ENCODE measurements at regions of chr14 and their contacts with region 1.

Region 1: GRCh38 chr14:100900837-100901390 is 2.6 kb downstream of the RTL1 start:
- DNase-seq: peak; percentile 80

Region 2: GRCh38 chr14:100375963-100376735 is 524.8 kb before region 1 on chr14:
- in situ Hi-C with region 1: loop called (anchors 25 kb)
- DNase-seq: peak; percentile 97

Region 3: DNA sequence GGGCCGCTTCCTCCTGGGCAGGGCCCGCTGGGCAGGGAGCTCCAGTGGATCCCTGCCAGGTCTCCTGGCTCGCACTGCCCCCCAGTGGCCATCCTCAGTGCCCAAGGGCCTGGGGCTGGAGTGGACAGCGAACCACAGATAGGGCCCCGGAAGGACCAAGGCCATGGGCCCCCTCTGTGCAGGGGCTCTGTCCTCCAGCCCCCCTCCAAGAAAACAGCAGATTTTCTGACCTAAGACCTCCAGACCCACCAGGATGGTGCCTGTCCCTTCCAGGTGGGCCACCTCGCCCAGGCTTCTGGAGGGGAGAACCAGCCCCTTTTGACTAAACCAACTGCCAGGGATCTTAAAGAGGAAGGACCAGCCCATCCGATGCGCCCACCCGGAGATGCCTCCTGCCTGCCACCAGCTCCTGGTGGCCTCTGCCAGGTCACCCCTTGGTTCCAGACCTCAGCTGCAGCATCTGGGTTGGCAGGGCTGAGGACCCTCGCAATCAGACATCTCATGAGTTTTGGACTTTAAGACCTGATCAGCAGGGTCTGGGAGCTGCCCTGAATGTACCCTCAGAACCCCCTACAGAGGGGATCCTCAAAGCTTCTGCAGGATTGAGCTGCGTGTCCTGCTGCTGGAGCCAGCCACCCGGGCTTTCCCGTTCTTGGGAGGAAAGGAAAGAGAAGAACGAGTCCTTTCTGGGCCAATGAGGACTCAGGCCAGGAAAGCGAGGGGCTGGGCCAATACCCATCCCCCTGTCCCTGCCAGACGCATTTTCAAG is 334.6 kb after region 1 on chr14:
- in situ Hi-C with region 1: loop called (anchors 25 kb)
- DNase-seq: peak; percentile 58

Region 4: GRCh38 chr14:101628471-101628966 is 727.6 kb after region 1 on chr14:
- in situ Hi-C with region 1: loop called (anchors 25 kb)
- DNase-seq: peak; percentile 89